GM10248 (cell line): ENCODE measurements at regions of chr5 and their contacts with region 1.

Region 1: GRCh38 chr5:177454397-177455035 is 7.9 kb downstream of the PRR7 start:
- DNase-seq: peak; percentile 95
- CTCF ChIP-seq: peak; percentile 90

Region 2: DNA sequence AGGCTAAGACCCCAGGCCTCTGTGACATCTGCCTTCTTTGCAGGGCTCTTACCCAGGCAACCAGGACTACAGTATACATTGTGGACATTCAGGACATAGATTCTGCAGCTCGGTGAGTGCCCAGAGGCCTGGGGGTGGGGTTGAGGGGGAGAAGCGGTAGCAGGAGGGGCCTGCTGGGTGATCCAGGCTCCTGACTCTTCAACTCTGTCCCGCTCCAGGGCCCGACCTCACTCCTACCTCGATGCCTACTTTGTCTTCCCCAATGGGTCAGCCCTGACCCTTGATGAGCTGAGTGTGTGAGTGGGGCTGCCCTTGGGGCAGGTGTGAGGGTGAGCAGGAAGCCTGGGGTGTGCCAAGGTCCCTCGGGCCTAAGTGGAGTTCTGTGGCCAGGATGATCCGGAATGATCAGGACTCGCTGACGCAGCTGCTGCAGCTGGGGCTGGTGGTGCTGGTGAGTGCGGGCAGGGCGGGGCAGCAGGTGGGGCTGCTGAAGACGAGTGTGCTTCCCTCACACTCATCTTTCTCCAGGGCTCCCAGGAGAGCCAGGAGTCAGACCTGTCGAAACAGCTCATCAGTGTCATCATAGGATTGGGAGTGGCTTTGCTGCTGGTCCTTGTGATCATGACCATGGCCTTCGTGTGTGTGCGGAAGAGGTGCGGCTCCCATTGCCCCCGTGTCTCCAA is 864.3 kb before region 1 on chr5:
- CTCF ChIA-PET with region 1: no interaction called
- POLR2A ChIA-PET with region 1: no interaction called
- DNase-seq: no peak
- CTCF ChIP-seq: no peak

Region 3: DNA sequence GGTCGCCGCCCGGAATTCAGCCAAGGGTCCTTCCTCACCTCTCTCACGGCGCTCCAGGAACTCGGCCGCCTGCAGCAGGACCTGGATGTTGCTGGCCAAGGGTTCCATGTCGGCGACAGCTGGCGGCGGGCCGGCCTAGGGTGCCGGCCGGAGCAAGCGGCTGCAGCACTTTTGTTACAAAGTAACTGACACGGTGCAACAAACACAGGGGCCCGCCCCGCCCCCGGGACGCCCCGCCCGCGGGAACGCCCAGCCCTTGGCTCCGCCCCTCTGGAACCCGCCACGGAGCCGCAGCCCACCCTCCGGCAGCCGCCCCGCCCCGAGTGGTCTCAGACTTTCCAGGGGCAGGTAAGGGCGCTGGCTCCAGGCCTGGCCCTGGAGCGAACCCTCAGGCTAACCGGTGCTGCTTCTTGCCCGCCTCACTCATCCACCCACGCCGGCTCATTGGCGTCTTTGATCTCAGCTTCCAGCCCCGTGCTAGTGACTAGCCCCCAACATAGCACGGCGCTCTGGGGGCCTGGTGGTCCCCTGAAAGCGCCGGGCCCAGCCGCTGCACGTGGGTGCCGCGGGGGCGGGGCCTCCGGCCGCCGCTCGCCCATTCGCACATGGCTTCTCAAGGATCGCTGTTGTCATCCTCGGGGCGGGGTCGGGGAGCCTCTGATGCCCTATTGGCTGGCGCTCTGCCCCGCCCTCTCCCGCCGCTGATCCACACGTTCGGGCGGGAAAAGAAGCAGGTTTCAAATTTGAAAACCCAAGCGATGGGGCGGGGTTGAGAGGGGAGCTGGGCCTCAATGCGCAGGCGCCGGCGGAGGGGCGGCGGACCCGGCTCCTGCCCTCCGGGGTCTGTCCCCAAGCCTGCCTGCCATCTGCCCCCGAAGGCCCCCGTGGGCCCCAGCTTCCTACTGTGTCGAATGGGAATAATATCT is 142.5 kb before region 1 on chr5 and contains the start of gene MXD3:
- CTCF ChIA-PET with region 1: interaction called, 64 read pairs
- POLR2A ChIA-PET with region 1: no interaction called
- DNase-seq: peak; percentile 98
- CTCF ChIP-seq: no peak

Region 4: GRCh38 chr5:177327539-177328522 is 126.7 kb before region 1 on chr5:
- CTCF ChIA-PET with region 1: interaction called, 20 read pairs
- POLR2A ChIA-PET with region 1: no interaction called
- DNase-seq: no peak
- CTCF ChIP-seq: no peak

Region 5: DNA sequence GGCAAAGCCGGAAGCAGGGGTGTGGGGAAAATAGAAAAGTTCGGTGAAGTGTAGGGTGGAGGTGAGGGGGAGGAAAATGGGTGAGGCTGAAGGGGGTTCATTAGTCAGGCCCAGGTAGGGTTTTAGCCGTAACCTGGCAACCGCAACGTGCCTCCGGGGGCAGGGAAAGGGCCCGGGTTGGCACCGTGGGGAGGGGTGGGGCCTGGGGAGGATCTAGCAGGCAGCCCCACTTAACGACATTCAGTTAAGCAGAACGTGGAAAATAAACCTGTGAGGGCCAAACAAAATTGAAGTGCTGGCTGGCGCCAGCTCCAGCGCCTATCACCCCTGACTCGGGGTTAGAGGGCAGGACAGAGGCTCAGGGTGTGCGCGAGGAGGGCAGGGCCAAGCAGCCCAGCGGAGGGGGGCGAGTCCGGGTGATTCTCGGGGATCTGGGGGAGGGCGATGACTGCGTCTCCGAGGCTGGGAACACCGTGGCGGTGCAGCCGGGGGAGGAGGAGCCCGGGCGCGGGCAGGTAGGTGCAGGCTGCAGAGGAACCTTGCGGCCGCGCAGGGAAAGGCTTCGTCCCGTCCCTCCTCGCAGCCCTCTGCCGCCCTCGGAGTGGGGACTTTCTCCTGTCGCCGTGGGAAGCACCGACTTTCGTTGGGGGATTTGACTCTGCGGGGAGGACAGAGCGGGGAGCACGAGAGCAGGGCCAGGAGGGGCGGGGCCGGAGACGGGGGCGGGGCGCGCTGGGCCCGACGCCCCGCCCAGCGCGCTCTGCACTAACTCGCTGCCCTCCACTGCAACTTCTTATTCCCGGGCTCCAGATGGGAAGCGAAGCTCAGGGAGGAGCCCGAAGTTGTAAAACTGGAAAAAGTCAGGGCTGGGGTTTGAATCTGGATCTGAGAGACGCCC is 91.7 kb before region 1 on chr5:
- CTCF ChIA-PET with region 1: interaction called, 13 read pairs
- POLR2A ChIA-PET with region 1: no interaction called
- DNase-seq: peak; percentile 86
- CTCF ChIP-seq: no peak

Region 6: GRCh38 chr5:177390363-177391300 is 63.9 kb before region 1 on chr5:
- CTCF ChIA-PET with region 1: interaction called, 285 read pairs
- POLR2A ChIA-PET with region 1: interaction called, 3 read pairs
- DNase-seq: peak; percentile 91
- CTCF ChIP-seq: peak; percentile 90

Region 7: GRCh38 chr5:177431317-177432142 is 23.0 kb before region 1 on chr5:
- CTCF ChIA-PET with region 1: interaction called, 163 read pairs
- POLR2A ChIA-PET with region 1: interaction called, 6 read pairs
- DNase-seq: peak; percentile 59
- CTCF ChIP-seq: no peak

Region 8: GRCh38 chr5:177478711-177479646 is 24.5 kb after region 1 on chr5:
- CTCF ChIA-PET with region 1: interaction called, 59 read pairs
- POLR2A ChIA-PET with region 1: interaction called, 3 read pairs
- DNase-seq: peak; percentile 35
- CTCF ChIP-seq: no peak